HepG2 (cell line): ENCODE measurements at regions of chr17 and their contacts with region 1.

Region 1: DNA sequence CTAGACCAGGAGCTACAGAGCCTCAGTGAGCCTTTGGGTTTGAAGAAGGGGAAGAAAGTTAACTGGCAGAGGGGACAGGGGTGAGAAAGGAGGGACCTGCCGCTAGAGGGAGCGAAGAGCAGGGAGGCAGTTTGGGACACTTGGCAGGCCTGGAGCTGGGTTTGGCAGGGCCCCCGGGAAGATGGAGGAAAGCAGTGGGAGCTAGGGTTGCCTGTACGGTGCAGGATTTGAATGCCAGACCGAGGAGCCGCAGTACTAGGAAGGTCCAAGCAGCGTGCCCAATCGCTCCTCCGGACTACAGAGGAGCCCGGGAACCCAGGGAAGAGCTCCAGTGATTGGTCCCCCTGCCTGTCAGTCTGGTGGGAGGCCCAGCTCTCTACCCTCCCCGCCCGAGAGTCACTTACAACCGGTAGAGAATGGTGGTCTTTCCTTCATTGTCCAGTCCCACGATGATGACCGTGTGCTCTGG is 1.3 kb downstream of the ARL5C start:
- DNase-seq: peak; percentile 57
- ATAC-seq: peak; percentile 83
- H3K4me3 ChIP-seq: peak overlapping the region in 2 of 3 experiments; percentile 1 to 51; a peak in 3 of 6 replicates
- H3K27ac ChIP-seq: no peak overlapping the region
- H3K4me1 ChIP-seq: peaks cover 14% of the 10 kb centered on the region; the same call in 1 of the 2 replicates
- H3K27me3 ChIP-seq: peaks cover 4 to 27% of the 10 kb centered on the region in 2 experiments; a peak in 4 of 5 replicates
- CTCF ChIP-seq: peak; percentile 82
- EP300 ChIP-seq: no peak
- POLR2A ChIP-seq: no peak
- RAD21 ChIP-seq: 0 out of 2 replicates have a peak, but pooled peaks have one; percentile 34

Region 2: GRCh38 chr17:38752119-38752929 is 412.4 kb before region 1 on chr17 and contains the start of gene PSMB3:
- CTCF ChIA-PET with region 1: no interaction called
- POLR2A ChIA-PET with region 1: no interaction called
- in situ Hi-C with region 1: loop called (anchors 25 kb)
- intact Hi-C with region 1: no loop called
- DNase-seq: peak; percentile 100
- ATAC-seq: peak; percentile 86
- H3K4me3 ChIP-seq: peak within 1 kb of the TSS; percentile 82 to 93 (median 84)
- H3K27ac ChIP-seq: peak within 1 kb of the TSS; percentile 81
- H3K4me1 ChIP-seq: peaks cover 30% of the 10 kb centered on the region
- H3K27me3 ChIP-seq: no peaks in the 10 kb centered on the region; a peak in 1 of 5 replicates
- CTCF ChIP-seq: peak; percentile 2; the same call in 1 of the 2 replicates
- EP300 ChIP-seq: 0 out of 4 replicates have a peak, but pooled peaks of 1 of the 2 experiments have one; percentile 15
- POLR2A ChIP-seq: peak; percentile 77 to 82
- RAD21 ChIP-seq: no peak
- total RNA-seq, gene PSMB3: 517 and 688 TPM in 2 replicates

Region 3: DNA sequence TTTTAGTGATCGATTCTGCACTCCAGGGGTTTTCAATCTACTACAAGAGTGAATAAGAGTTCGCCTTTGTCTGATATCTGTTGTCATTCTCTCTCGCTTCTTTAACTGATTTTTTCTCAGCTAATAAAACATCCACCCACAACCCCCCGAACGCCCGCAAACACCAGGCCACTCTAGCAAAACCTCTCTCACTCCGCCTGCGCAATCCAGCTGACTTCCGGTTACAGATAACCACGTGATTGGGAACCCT is 35.0 kb after region 1 on chr17:
- CTCF ChIA-PET with region 1: no interaction called
- POLR2A ChIA-PET with region 1: interaction called, 15 read pairs
- in situ Hi-C with region 1: no loop called
- intact Hi-C with region 1: no loop called
- DNase-seq: peak; percentile 96
- ATAC-seq: peak; percentile 61
- H3K4me3 ChIP-seq: peak overlapping the region; percentile 65 to 92 (median 77)
- H3K27ac ChIP-seq: peak overlapping the region; percentile 97
- H3K4me1 ChIP-seq: peaks cover 59% of the 10 kb centered on the region
- H3K27me3 ChIP-seq: no peaks in the 10 kb centered on the region; a peak in 1 of 5 replicates
- CTCF ChIP-seq: no peak
- EP300 ChIP-seq: no peak
- POLR2A ChIP-seq: no peak; a peak in 2 of 4 replicates
- RAD21 ChIP-seq: no peak